GM12878 (cell line): ENCODE measurements at regions of chr12 and their contacts with region 1.

Region 1: GRCh38 chr12:75814851-75815754 is 216.5 kb downstream of the PHLDA1 start:
- DNase-seq: no peak
- ATAC-seq: peak; percentile 74
- H3K4me3 ChIP-seq: no peak overlapping the region
- H3K27ac ChIP-seq: no peak overlapping the region
- H3K4me1 ChIP-seq: peaks cover 4% of the 10 kb centered on the region; the same call in 1 of the 2 replicates
- H3K27me3 ChIP-seq: no peaks in the 10 kb centered on the region
- CTCF ChIP-seq: no peak
- EP300 ChIP-seq: no peak
- POLR2A ChIP-seq: no peak
- RAD21 ChIP-seq: no peak

Region 2: DNA sequence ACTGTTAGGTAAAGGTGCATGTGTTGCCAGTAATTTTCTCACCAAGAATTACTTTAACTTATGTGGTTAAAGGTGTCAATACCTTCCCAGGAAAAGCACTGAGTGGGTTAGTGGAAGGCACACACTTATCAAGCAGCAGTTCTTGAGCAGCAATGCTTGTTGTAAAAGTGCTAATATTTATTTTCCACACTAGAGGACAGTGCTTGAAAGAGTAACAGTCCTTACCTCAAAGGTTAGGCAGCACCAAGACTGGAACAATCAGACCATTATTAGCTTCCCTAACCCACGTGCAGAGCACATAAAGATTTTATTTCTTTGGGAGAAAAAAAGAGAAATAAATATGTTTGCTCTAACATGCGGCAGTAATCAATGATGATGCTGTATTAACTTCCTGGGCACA is 254.9 kb before region 1 on chr12:
- CTCF ChIA-PET with region 1: interaction called, 10 read pairs
- POLR2A ChIA-PET with region 1: no interaction called
- RAD21 ChIA-PET with region 1: no interaction called
- SMC1A ChIA-PET with region 1: interaction called, 5 read pairs
- in situ Hi-C with region 1: no loop called
- intact Hi-C with region 1: no loop called
- DNase-seq: no peak
- ATAC-seq: peak; percentile 88
- H3K4me3 ChIP-seq: no peak overlapping the region
- H3K27ac ChIP-seq: no peak overlapping the region
- H3K4me1 ChIP-seq: no peaks in the 10 kb centered on the region
- H3K27me3 ChIP-seq: no peaks in the 10 kb centered on the region
- CTCF ChIP-seq: peak; percentile 27 to 63 (median 31); a peak in 4 of 6 replicates
- EP300 ChIP-seq: no peak
- POLR2A ChIP-seq: no peak
- RAD21 ChIP-seq: peak; percentile 84